Posterior vena cava (tissue), 2 donors: ENCODE measurements at regions of chr9 and their contacts with region 1.

Region 1: GRCh38 chr9:8254541-8254940 is 455.0 kb upstream of the DMAC1 start:
- DNase-seq: no peak

Region 2: DNA sequence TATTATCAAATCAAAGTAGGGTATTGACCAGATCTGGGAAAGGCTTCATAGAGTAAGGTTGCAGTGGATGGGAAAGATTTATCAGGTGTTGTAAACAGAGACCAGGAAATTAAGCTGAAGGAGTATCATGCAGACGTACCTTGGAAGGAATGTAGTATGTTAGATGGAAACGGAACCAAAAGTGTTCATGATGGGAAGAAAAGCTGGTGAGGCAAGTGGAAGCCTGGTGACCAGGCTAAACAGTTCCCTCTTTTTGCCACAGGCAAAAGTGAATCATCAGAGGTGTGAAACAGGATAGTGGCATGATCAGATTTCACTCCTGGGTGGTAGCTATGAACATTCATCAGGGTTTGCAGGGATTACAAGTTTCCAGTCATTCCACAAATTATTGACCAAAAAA is 325.1 kb after region 1 on chr9:
- intact Hi-C with region 1: no loop called
- DNase-seq: no peak

Region 3: DNA sequence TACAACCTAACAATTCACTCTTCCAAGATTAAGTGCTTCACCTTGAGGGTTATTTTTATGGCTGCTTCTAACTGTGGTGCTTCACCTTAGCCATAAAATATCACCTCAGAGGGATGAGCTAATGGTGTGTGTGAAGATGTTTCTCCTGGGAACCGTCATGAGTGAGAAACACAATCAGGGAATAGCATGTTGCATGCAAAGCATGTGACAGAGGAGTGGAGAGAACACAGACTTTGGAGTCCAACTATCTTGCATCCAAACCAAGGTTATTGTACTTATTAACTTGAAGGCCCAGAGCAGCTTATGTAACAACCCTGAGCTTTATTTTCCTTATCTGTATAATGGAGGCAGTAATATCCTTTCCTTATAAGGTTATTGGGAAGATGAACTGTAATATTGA is 634.0 kb after region 1 on chr9:
- intact Hi-C with region 1: loop called in 1 of 2 experiments (anchors 5 kb)
- DNase-seq: no peak